Dorsolateral prefrontal cortex (tissue), 120 donors: ENCODE measurements at regions of chr6 and their contacts with region 1.

Region 1: GRCh38 chr6:138428944-138429598 is 25.0 kb downstream of the HEBP2 start:
- DNase-seq: peak in 1 of 10 donors; percentile 14
- H3K4me3 ChIP-seq: peak overlapping the region in 50 of 59 donors; percentile 1 to 57 (median 36)
- H3K27ac ChIP-seq: peak overlapping the region in 26 of 59 donors; percentile 5 to 88 (median 72)
- H3K27me3 ChIP-seq: no peaks in the 10 kb centered on the region
- CTCF ChIP-seq: peak in 55 of 56 donors; percentile 47 to 92 (median 73)

Region 2: GRCh38 chr6:138001750-138002349 is 427.2 kb before region 1 on chr6:
- intact Hi-C with region 1: no loop called
- DNase-seq: peak in 7 of 10 donors; percentile 15 to 69 (median 44)
- H3K4me3 ChIP-seq: no peak overlapping the region
- H3K27ac ChIP-seq: no peak overlapping the region
- H3K27me3 ChIP-seq: peaks cover 0 to 5% (median 0%) of the 10 kb centered on the region in 45 donors
- CTCF ChIP-seq: peak; percentile 72 to 95 (median 88)

Region 3: GRCh38 chr6:138387597-138388368 is 41.3 kb before region 1 on chr6:
- intact Hi-C with region 1: no loop called
- DNase-seq: no peak
- H3K4me3 ChIP-seq: no peak overlapping the region
- H3K27ac ChIP-seq: no peak overlapping the region
- H3K27me3 ChIP-seq: no peaks in the 10 kb centered on the region
- CTCF ChIP-seq: no peak

Region 4: GRCh38 chr6:138509371-138509770 is 80.3 kb after region 1 on chr6:
- intact Hi-C with region 1: loop called (anchors 5 kb)
- DNase-seq: peak in 6 of 10 donors; percentile 33 to 66 (median 48)
- H3K4me3 ChIP-seq: no peak overlapping the region
- H3K27ac ChIP-seq: no peak overlapping the region
- H3K27me3 ChIP-seq: peaks cover 0 to 51% (median 0%) of the 10 kb centered on the region in 45 donors
- CTCF ChIP-seq: peak; percentile 28 to 75 (median 64)

Region 5: DNA sequence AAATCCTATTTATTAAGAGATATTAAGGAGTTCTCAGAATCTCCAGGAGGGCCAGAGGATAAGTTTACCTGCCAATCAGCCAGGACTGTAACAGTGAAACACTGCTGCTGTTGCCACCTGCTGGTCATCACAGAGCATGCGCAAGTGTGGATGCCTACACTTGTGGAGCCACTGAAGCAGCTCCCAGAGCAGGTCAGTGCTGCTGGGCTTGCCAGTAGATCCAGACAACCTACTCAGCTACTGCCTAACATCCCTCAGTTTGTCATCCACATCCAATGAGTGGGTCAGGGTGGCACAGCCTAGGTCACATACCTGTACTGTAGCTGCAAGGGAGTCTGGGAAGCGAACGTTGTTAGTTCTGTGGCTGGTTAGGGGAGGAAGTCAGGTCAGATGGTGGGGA is 88.6 kb after region 1 on chr6:
- intact Hi-C with region 1: loop called in 1 of 2 experiments (anchors 5 kb)
- DNase-seq: peak in 6 of 10 donors; percentile 22 to 52 (median 36)
- H3K4me3 ChIP-seq: no peak overlapping the region
- H3K27ac ChIP-seq: no peak overlapping the region
- H3K27me3 ChIP-seq: peaks cover 0 to 40% (median 0%) of the 10 kb centered on the region in 45 donors
- CTCF ChIP-seq: peak in 53 of 56 donors; percentile 18 to 67 (median 51)

Region 6: GRCh38 chr6:138588805-138589434 is 159.8 kb after region 1 on chr6:
- intact Hi-C with region 1: loop called (anchors 2 to 5 kb)
- DNase-seq: peak in 7 of 10 donors; percentile 47 to 64 (median 56)
- H3K4me3 ChIP-seq: no peak overlapping the region
- H3K27ac ChIP-seq: no peak overlapping the region
- H3K27me3 ChIP-seq: peaks cover 0 to 3% (median 0%) of the 10 kb centered on the region in 45 donors
- CTCF ChIP-seq: peak; percentile 80 to 99 (median 95)

Region 7: DNA sequence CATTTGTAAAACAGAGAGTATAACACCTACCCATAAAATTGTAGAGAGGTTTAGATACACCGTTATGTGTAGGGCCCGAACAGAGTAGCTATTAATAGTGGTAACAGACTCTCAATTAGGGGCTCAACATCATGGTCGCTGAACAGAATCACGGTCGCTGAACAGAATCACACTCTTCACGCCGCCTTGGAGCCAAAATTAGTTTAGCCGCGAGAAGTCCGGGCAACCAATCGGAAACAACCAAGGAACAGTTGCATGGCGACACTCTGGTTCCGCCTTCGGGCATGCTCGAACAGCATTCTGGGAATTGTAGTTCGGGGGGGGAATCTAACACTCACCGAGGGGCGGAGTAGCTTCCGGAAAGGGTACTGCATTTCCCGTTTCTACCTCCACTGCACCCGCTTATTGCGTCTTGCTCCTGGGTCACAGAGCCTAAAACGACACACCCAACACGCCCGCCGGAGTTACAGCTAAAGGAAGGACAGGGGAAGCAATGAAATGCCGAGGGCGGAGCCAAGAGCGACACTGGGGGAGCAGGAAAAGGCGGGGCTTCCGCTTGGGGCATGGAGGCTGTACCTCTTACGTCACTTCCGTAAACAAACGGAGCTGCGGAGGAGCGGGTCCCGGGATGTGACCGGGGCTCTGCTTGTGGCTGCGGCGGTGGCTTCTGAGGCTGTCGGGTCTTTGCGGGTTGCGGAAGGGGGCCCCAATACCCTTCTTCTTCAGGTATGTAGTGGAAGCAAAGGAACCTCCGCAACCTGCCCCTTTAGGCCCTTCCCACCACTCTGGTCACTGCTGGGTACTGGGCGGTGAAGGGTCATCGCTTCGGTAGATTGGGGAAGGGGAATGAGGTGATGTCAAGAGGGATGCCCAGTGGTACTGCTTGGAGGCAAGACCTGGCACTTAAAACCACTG is 344.4 kb after region 1 on chr6 and contains the start of gene CCDC28A:
- intact Hi-C with region 1: loop called in 1 of 2 experiments (anchors 5 kb)
- DNase-seq: peak; percentile 85 to 97 (median 92)
- H3K4me3 ChIP-seq: peak within 1 kb of the TSS; percentile 66 to 99 (median 88)
- H3K27ac ChIP-seq: peak within 1 kb of the TSS; percentile 95 to 100 (median 99)
- H3K27me3 ChIP-seq: no peaks in the 10 kb centered on the region
- CTCF ChIP-seq: peak in 18 of 56 donors; percentile 7 to 51 (median 26)
- total RNA-seq, gene CCDC28A: 18.1 to 50.8 (median 35.7) TPM